T-cell (primary cell): ENCODE measurements at regions of chr3 and their contacts with region 1.

Region 1: DNA sequence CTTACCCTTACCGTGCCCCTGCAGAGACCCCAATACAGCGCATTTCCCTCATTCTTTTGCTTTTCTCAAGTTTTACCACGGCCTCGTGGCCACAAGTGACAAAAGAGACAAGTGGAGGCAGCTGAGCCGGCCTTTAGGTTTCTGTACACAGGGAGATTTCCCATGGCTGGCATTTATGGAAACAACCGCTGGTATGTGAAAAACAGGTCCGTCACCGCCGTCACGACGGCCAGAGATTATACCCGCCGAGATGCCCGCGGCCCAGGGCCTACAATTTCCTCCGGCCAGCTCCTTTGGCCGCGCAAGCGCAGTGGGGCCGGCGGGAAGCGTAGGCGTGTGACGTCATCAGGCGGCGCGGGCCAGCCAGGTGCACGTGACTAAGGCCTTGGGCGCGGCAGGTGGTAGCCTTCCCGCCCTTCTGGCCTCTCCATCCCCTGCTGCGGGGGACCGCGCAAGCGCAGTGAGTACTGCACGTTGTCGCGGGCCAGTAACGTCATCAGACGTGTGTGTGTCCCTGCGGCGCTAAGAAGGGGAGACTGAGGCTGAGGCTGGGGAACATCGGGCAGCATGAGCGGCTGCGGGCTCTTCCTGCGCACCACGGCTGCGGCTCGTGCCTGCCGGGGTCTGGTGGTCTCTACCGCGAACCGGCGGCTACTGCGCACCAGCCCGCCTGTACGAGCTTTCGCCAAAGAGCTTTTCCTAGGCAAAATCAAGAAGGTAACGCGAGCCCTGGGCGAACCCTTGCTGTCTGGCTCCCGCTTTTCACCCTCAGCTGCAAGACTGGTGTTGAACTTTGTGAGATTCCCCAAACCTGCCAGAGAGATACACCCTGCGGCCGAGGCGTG is at the start of gene ACAD9:
- DNase-seq: peak; percentile 90 to 98 (median 93)
- ATAC-seq: peak; percentile 91 to 94 (median 94)
- H3K4me3 ChIP-seq: peak within 1 kb of the TSS; percentile 67 to 97
- H3K4me3 Mint-ChIP-seq: peak within 1 kb of the TSS; percentile 71 to 90 (median 83)
- H3K27ac ChIP-seq: peak within 1 kb of the TSS; percentile 96
- H3K27ac Mint-ChIP-seq: peak within 1 kb of the TSS; percentile 90 to 97
- H3K4me1 ChIP-seq: peaks cover 17 to 60% of the 10 kb centered on the region in 2 experiments
- H3K4me1 Mint-ChIP-seq: peaks cover 70 to 80% (median 70%) of the 10 kb centered on the region in 3 donors
- H3K27me3 ChIP-seq: no peaks in the 10 kb centered on the region
- H3K27me3 Mint-ChIP-seq: no peaks in the 10 kb centered on the region
- total RNA-seq, gene ACAD9: 45.1 to 91.5 (median 54.3) TPM

Region 2: GRCh38 chr3:128922804-128923459 is 43.6 kb after region 1 on chr3:
- CTCF ChIA-PET with region 1: interaction called, 6 to 15 read pairs
- POLR2A ChIA-PET with region 1: no interaction called
- DNase-seq: peak; percentile 22 to 71 (median 46)
- ATAC-seq: peak; percentile 81 to 91 (median 88)
- H3K4me3 ChIP-seq: peak overlapping the region; percentile 41 to 44
- H3K4me3 Mint-ChIP-seq: peak overlapping the region; percentile 75 to 85 (median 77)
- H3K27ac ChIP-seq: peak overlapping the region; percentile 53
- H3K27ac Mint-ChIP-seq: peak overlapping the region; percentile 90 to 97
- H3K4me1 ChIP-seq: peaks cover 18 to 31% of the 10 kb centered on the region in 2 experiments
- H3K4me1 Mint-ChIP-seq: peaks cover 41 to 44% (median 43%) of the 10 kb centered on the region in 3 donors
- H3K27me3 ChIP-seq: no peaks in the 10 kb centered on the region
- H3K27me3 Mint-ChIP-seq: no peaks in the 10 kb centered on the region

Region 3: DNA sequence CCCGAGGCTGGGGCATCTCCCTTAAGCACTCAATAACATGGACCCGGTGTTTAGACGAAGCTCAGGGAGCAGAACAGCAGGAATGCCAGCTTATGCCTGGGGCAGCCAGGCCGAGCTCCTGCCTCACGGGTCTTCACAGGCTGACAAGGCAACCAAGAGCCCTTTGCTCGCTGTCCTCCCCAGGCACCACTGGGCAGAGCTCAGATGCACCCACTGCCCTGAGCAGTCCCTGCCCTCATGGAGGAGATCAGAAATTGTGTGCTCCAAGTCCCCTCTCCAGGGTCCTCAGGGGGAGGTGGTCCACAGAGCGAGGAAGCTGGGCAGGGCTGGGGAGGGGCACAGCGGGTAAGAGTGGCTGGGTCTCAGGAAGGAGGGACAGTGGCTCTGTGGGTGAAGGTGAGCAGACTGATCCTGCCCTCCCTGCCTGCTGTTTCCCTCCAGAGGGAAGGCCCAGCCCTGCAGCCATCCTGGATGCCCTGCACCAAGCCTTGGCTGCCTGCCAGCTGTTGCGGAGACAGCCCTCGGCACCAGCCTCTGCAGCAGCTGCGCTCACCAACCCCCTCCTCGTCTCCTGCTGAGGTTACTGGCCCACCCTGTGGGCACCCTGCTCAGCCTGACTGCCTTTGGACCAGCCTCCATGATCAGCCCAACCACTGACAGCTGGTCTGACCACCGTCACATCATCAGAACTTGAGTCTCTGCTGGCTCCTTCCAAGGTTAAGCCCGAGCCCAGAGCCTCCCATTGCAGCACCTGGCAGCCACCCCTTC is 160.1 kb after region 1 on chr3:
- CTCF ChIA-PET with region 1: no interaction called
- POLR2A ChIA-PET with region 1: no interaction called
- DNase-seq: peak in 6 of 35 experiments; percentile 15 to 37 (median 26)
- ATAC-seq: no peak
- H3K4me3 ChIP-seq: no peak overlapping the region
- H3K4me3 Mint-ChIP-seq: no peak overlapping the region
- H3K27ac ChIP-seq: no peak overlapping the region
- H3K27ac Mint-ChIP-seq: no peak overlapping the region
- H3K4me1 ChIP-seq: peaks cover 9 to 25% of the 10 kb centered on the region in 2 experiments
- H3K4me1 Mint-ChIP-seq: peaks cover 19 to 33% (median 31%) of the 10 kb centered on the region in 3 donors
- H3K27me3 ChIP-seq: peaks cover 0 to 35% of the 10 kb centered on the region in 2 experiments
- H3K27me3 Mint-ChIP-seq: peaks cover 16 to 25% of the 10 kb centered on the region in 2 donors

Region 4: GRCh38 chr3:129144786-129145185 is 265.4 kb after region 1 on chr3:
- CTCF ChIA-PET with region 1: interaction called in 1 of 2 experiments, 3 read pairs
- POLR2A ChIA-PET with region 1: interaction called in 1 of 2 experiments, 10 read pairs
- DNase-seq: no peak
- ATAC-seq: no peak
- H3K4me3 ChIP-seq: no peak overlapping the region
- H3K4me3 Mint-ChIP-seq: no peak overlapping the region
- H3K27ac ChIP-seq: no peak overlapping the region
- H3K27ac Mint-ChIP-seq: no peak overlapping the region
- H3K4me1 ChIP-seq: no peaks in the 10 kb centered on the region
- H3K4me1 Mint-ChIP-seq: peaks cover 0 to 3% (median 1%) of the 10 kb centered on the region in 3 donors
- H3K27me3 ChIP-seq: no peaks in the 10 kb centered on the region
- H3K27me3 Mint-ChIP-seq: no peaks in the 10 kb centered on the region